Activated CD4-positive, alpha-beta memory T cell treated with anti-CD3 and anti-CD28 coated beads, Interleukin-2, amount 10 ng/mL, durations not matched to agents 7 days and 5 days (primary cell): ENCODE measurements at regions of chr2 and their contacts with region 1.

Region 1: GRCh38 chr2:230160112-230160660 is 59.6 kb downstream of the SP110 start:
- DNase-seq: peak; percentile 62
- H3K4me3 Mint-ChIP-seq: no peak overlapping the region
- H3K27ac Mint-ChIP-seq: no peak overlapping the region
- H3K4me1 Mint-ChIP-seq: peaks cover 2% of the 10 kb centered on the region
- H3K27me3 Mint-ChIP-seq: no peaks in the 10 kb centered on the region

Region 2: GRCh38 chr2:230007931-230008707 is 152.1 kb before region 1 on chr2:
- CTCF ChIA-PET with region 1: interaction called, 41 read pairs
- POLR2A ChIA-PET with region 1: no interaction called
- DNase-seq: peak; percentile 83
- H3K4me3 Mint-ChIP-seq: no peak overlapping the region
- H3K27ac Mint-ChIP-seq: no peak overlapping the region
- H3K4me1 Mint-ChIP-seq: peaks cover 7% of the 10 kb centered on the region
- H3K27me3 Mint-ChIP-seq: no peaks in the 10 kb centered on the region

Region 3: DNA sequence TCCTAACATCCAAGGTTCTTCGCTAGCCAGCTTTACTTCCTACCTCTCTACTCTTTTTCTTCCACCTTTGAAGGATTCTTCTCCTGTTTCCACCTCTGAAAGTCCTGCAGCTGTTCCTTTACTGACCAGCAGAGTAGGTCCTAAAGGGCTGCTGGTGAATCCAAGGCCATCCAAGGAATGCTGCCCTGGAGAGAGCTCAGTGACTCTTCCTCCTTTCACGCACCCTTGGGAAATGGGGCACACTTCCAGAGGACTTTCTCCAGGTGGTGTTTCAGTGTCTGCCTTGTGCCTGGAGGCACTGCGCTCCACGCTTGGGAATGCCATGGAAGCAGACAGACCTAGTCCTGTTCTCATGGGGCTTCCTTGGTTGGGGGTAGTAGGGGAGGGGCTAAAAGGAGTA is 136.9 kb before region 1 on chr2:
- CTCF ChIA-PET with region 1: interaction called, 14 read pairs
- POLR2A ChIA-PET with region 1: no interaction called
- DNase-seq: no peak
- H3K4me3 Mint-ChIP-seq: no peak overlapping the region
- H3K27ac Mint-ChIP-seq: no peak overlapping the region
- H3K4me1 Mint-ChIP-seq: no peaks in the 10 kb centered on the region
- H3K27me3 Mint-ChIP-seq: peaks cover 2% of the 10 kb centered on the region

Region 4: GRCh38 chr2:230068016-230068650 is 92.1 kb before region 1 on chr2:
- CTCF ChIA-PET with region 1: interaction called, 45 read pairs
- POLR2A ChIA-PET with region 1: interaction called, 3 read pairs
- DNase-seq: peak; percentile 48
- H3K4me3 Mint-ChIP-seq: peak overlapping the region; percentile 77
- H3K27ac Mint-ChIP-seq: no peak overlapping the region
- H3K4me1 Mint-ChIP-seq: peaks cover 21% of the 10 kb centered on the region
- H3K27me3 Mint-ChIP-seq: peaks cover 30% of the 10 kb centered on the region

Region 5: GRCh38 chr2:230144355-230144754 is 15.8 kb before region 1 on chr2:
- CTCF ChIA-PET with region 1: interaction called, 18 read pairs
- POLR2A ChIA-PET with region 1: no interaction called
- DNase-seq: no peak
- H3K4me3 Mint-ChIP-seq: no peak overlapping the region
- H3K27ac Mint-ChIP-seq: no peak overlapping the region
- H3K4me1 Mint-ChIP-seq: no peaks in the 10 kb centered on the region
- H3K27me3 Mint-ChIP-seq: peaks cover 12% of the 10 kb centered on the region

Region 6: GRCh38 chr2:230170532-230170931 is 10.3 kb after region 1 on chr2:
- CTCF ChIA-PET with region 1: interaction called, 32 read pairs
- POLR2A ChIA-PET with region 1: no interaction called
- DNase-seq: no peak
- H3K4me3 Mint-ChIP-seq: no peak overlapping the region
- H3K27ac Mint-ChIP-seq: no peak overlapping the region
- H3K4me1 Mint-ChIP-seq: peaks cover 12% of the 10 kb centered on the region
- H3K27me3 Mint-ChIP-seq: no peaks in the 10 kb centered on the region

Region 7: GRCh38 chr2:230176996-230177395 is 16.8 kb after region 1 on chr2:
- CTCF ChIA-PET with region 1: interaction called, 15 read pairs
- POLR2A ChIA-PET with region 1: no interaction called
- DNase-seq: no peak
- H3K4me3 Mint-ChIP-seq: no peak overlapping the region
- H3K27ac Mint-ChIP-seq: no peak overlapping the region
- H3K4me1 Mint-ChIP-seq: no peaks in the 10 kb centered on the region
- H3K27me3 Mint-ChIP-seq: no peaks in the 10 kb centered on the region

Region 8: GRCh38 chr2:230286048-230286447 is 125.9 kb after region 1 on chr2:
- CTCF ChIA-PET with region 1: no interaction called
- POLR2A ChIA-PET with region 1: no interaction called
- DNase-seq: no peak
- H3K4me3 Mint-ChIP-seq: no peak overlapping the region
- H3K27ac Mint-ChIP-seq: no peak overlapping the region
- H3K4me1 Mint-ChIP-seq: peaks cover 34% of the 10 kb centered on the region
- H3K27me3 Mint-ChIP-seq: no peaks in the 10 kb centered on the region

Region 9: DNA sequence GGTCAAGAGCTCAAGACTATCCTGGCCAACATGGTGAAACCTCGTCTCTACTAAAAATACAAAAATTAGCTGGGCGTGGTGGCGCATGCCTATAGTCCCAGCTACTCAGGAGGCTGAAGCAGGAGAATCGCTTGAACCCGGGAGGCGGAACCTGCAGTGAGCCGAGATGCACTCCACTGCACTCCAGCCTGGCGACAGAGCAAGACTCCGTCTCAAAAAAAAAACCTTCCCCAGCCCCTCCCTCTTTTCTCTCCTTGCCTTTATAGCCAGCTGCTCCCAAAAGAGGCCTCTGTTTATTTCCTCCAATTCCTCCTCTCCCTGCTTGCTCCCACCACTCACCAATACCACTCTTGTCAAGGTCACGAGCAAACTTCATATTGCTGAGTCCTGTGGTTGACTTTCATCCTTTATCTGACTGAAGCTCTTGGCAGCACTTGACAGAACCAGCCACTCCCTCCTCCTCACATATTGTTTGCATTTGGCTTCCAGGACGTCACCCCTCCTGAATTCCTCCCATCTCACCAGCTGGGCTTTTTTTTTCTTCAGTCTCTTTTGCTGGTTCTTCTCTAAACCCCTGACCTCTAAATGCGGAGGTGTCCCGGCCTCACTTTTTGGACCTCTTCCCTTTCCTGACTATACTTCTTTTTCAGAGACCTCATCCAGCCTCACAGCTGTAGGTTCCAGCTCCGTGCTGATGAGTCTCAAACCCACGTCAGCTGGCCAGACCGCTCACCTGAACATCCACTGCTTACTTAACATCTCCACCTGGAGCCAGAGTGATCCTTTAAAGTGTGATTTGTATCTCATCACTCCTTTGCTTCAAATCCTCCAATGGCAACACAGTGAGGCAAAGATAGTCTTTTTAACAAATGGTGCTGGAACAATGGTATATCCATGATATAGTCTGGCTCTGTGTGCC is 467.9 kb after region 1 on chr2:
- CTCF ChIA-PET with region 1: no interaction called
- POLR2A ChIA-PET with region 1: no interaction called
- DNase-seq: no peak
- H3K4me3 Mint-ChIP-seq: no peak overlapping the region
- H3K27ac Mint-ChIP-seq: no peak overlapping the region
- H3K4me1 Mint-ChIP-seq: peaks cover 5% of the 10 kb centered on the region
- H3K27me3 Mint-ChIP-seq: no peaks in the 10 kb centered on the region

Region 10: DNA sequence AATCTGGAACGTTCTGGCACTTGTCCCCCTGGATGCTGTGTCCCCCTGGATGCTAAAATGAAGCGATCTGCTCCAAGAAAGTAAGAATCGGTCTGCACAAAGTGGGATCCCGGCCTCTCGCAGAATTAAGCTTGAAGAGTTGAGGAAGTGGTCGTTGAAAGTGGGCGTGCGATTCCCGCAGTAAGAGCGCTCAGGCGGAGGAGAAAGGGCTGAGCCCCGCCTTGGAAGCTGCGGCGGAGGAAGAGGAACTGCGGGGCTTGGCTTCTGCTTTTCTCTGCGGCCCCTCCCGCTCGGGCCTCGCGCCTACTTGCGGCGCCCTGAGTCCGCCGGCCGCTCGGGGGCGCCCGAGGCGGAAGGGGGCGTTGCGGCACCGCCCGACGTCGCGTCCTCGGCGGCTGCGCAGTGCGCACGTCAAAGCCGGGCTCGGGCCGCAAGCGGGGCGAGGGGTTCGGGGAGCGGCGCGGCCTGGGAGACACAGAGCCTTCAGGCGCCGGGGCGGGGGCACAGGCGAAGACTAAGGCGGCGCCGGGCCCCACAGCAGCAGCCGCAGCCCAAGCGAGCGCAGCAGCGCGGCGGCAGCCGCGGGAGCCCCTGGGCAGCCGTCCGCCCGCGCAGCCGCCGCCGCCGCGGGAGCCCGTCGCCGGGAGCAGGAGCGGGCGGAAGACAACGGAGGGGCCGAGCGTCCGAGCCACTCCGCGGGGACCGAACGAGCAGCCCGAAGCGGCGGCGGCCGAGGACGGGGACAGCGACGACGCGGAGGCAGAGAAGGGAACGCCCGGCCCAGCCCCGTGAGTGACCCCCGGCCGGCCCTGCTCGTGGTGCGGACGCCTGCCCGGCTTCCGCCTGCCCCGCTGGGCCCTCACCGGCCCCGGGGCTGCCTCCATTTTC is 552.5 kb after region 1 on chr2 and contains the start of gene CAB39:
- CTCF ChIA-PET with region 1: no interaction called
- POLR2A ChIA-PET with region 1: no interaction called
- DNase-seq: peak; percentile 90
- H3K4me3 Mint-ChIP-seq: peak within 1 kb of the TSS; percentile 99
- H3K27ac Mint-ChIP-seq: peak within 1 kb of the TSS; percentile 97
- H3K4me1 Mint-ChIP-seq: peaks cover 42% of the 10 kb centered on the region
- H3K27me3 Mint-ChIP-seq: no peaks in the 10 kb centered on the region
- total RNA-seq, gene CAB39: 156 to 161 TPM